Esophagus muscularis mucosa (tissue), 4 donors: ENCODE measurements at regions of chr10 and their contacts with region 1.

Region 1: DNA sequence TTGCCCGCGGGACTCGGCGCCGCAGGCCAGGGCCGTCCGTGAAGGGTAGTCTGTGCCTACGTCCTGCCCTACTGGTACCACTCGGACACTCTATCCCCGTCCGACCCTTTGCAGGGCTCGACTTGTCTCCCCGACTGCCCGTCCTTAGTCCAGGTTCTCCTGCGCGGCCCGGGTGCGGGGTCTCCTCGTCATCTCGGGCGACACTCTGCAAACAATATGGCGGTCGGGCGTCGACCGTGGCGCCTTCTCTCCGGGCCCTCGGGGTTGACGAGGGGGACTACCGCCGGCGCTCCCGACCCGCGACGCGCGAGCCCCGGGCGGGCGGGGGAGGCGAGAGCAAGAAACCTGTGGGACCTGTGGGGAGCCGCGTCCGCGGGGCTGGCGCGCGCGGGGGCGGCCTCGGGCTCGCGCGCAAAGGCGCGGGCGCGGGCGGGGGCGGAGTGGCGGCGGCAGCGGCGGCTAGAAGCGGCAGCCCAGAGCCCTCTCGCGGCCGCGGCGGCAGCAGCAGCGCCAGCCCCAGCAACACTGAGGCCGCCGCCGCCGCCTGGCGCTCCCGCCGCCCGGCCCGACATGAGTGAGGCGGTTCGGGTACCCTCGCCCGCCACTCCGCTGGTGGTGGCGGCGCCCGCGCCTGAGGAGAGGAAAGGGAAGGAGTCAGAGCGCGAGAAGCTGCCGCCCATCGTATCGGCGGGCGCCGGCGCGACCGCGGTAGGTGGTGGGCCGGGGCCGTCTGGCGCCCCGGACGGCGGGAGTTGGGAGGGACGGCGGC is at the start of gene HECTD2:
- DNase-seq: no peak
- H3K4me3 ChIP-seq: peak within 1 kb of the TSS; percentile 88 to 97 (median 92)
- H3K27ac ChIP-seq: peak within 1 kb of the TSS; percentile 99 to 100 (median 99)
- H3K4me1 ChIP-seq: peaks cover 10 to 50% (median 41%) of the 10 kb centered on the region in 4 donors
- H3K27me3 ChIP-seq: no peaks in the 10 kb centered on the region
- CTCF ChIP-seq: peak; percentile 46 to 62 (median 53)
- EP300 ChIP-seq: no peak
- POLR2A ChIP-seq: no peak
- total RNA-seq, gene HECTD2: 18.2 to 29.5 (median 21.5) TPM

Region 2: DNA sequence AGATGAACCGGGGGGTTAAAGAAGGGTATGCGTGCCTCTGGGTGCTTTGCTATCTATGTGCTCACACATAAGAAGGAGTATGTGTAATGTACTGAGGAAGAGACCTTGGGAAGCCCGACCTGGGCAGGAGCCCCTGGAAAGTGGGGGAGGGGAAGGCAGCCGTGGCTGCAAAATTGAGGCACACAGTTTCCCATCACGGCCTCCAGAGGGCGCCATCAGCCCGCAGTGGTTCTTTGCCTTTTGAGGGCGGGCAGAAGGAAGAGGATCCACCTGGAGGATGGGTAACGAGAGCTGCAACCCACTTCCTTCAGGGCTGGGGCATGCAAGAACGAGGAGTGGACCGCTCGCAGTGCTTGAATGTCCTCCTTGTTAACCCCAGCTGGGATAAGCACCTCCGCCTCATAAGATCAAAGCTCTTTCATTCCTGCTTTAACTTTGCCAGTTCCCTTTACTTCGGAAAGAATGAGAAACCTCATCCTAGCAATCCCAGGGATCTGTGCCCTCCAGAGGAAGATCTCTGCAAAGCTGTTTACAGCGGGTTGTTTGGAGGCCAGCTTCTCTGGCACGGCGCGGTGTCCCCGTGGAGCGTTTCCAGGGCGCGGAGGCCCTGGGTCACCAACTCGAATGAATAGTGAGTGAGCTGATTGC is 111.7 kb before region 1 on chr10:
- intact Hi-C with region 1: loop called (anchors 5 kb)
- DNase-seq: no peak
- H3K4me3 ChIP-seq: peak overlapping the region; percentile 45 to 55 (median 52)
- H3K27ac ChIP-seq: peak overlapping the region; percentile 36 to 68 (median 50)
- H3K4me1 ChIP-seq: peaks cover 3 to 13% (median 13%) of the 10 kb centered on the region in 4 donors
- H3K27me3 ChIP-seq: peaks cover 0 to 5% (median 0%) of the 10 kb centered on the region in 4 donors
- CTCF ChIP-seq: peak; percentile 87 to 94 (median 91)
- EP300 ChIP-seq: no peak
- POLR2A ChIP-seq: no peak